Ovary (tissue), 10 donors: ENCODE measurements at regions of chr12 and their contacts with region 1.

Region 1: GRCh38 chr12:49188914-49189367 is at the start of gene TUBA1A:
- DNase-seq: peak; percentile 90 to 96 (median 91)
- H3K4me3 ChIP-seq: peak within 1 kb of the TSS; percentile 77
- H3K27ac ChIP-seq: peak within 1 kb of the TSS; percentile 94 to 95
- H3K4me1 ChIP-seq: peaks cover 3% of the 10 kb centered on the region
- H3K27me3 ChIP-seq: no peaks in the 10 kb centered on the region
- CTCF ChIP-seq: no peak
- EP300 ChIP-seq: peak; percentile 12
- POLR2A ChIP-seq: peak; percentile 94
- total RNA-seq, gene TUBA1A: 140 to 247 (median 184) TPM

Region 2: DNA sequence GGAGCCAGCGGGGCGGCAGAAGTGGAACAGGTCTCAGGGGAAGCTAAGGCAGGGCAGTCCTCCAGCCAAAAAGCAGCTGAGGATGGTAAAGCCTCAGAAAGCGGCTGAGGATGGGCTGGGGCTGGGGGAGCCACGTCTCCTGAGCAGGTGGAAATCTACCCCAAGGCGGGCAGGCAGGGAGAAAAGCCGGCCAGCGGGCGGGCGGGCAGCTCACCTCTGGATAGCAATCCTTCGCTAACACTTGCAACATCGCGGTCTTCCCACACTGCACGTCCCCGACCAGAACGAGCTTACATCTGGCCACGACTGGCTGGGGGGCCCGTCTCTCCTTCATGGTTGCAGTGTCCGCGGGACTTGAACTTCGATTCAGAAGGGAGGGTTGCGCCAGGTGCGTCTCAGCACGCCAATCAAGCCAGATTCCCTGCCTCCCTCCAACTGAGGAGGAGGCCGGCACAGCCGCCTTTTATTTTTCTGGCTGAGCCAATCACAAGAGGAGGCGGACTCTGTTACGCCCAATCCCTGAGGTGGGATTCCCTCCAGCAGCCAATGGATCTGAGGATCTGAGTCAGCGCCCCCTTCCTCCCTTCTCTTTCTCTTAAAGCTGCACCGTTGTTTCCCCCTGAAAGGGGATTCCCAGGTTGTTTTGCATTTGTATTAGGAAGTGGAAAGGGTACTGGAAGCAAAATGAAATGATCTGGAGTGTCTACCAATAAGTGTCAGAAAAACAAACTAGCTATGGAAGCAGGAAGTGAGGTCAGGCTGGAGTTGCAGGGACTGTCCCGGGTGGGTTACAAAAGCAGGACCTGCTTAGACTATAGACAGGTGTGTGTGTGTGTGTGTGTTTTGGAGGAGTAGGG is 323.3 kb before region 1 on chr12 and contains the start of gene RND1:
- intact Hi-C with region 1: no loop called
- DNase-seq: peak; percentile 82 to 92 (median 86)
- H3K4me3 ChIP-seq: peak within 1 kb of the TSS; percentile 55
- H3K27ac ChIP-seq: no peak within 1 kb of the TSS
- H3K4me1 ChIP-seq: peaks cover 2% of the 10 kb centered on the region
- H3K27me3 ChIP-seq: no peaks in the 10 kb centered on the region
- CTCF ChIP-seq: no peak
- EP300 ChIP-seq: no peak
- POLR2A ChIP-seq: peak; percentile 91
- total RNA-seq, gene RND1: 0.23 to 3.8 (median 0.38) TPM

Region 3: GRCh38 chr12:49130151-49131050 is 58.5 kb before region 1 on chr12:
- intact Hi-C with region 1: loop called in 3 of 4 experiments (anchors 2 to 10 kb)
- DNase-seq: peak; percentile 93 to 96 (median 94)
- H3K4me3 ChIP-seq: peak overlapping the region; percentile 65
- H3K27ac ChIP-seq: peak overlapping the region; percentile 93 to 98
- H3K4me1 ChIP-seq: peaks cover 6% of the 10 kb centered on the region
- H3K27me3 ChIP-seq: no peaks in the 10 kb centered on the region
- CTCF ChIP-seq: peak; percentile 72 to 91 (median 88)
- EP300 ChIP-seq: peak; percentile 38
- POLR2A ChIP-seq: peak; percentile 1

Region 4: DNA sequence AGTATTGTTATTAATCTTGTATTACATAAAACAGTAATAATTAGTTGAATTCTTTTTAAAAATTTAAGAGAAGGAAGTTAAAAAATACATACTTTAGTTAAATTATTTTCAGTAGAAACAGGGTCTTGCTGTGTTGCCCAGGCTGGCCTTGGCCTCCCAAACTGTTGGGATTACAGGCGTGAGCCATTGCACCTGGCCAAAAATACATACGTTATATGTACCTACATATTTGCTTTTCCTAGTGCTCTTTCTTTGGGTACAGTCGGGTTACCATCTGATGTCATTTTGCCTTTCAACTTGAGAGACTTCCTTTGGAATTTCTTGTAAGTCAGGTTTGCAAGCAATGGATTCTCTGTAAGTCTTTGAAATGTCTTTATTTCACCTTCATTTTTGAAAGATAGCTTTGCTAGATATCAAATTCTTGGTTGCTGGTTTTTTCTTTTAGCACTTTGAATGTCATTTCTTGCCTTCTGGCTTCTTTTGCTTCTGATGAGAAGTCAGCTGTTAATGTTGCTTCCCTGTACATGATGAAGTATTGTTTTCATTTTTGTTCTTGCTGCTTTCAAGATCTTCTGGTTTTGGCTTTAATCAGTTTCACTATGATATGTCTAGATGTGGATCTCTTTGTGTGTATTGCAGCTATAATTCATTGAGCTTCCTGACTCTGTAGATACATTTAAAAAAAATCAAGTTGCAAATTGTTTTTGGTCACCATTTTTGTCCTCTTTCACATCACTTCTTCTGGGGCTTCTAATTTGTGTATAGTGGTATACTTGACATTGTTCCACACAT is 262.7 kb after region 1 on chr12:
- intact Hi-C with region 1: no loop called
- DNase-seq: no peak
- H3K4me3 ChIP-seq: no peak overlapping the region
- H3K27ac ChIP-seq: no peak overlapping the region
- H3K4me1 ChIP-seq: no peaks in the 10 kb centered on the region
- H3K27me3 ChIP-seq: no peaks in the 10 kb centered on the region
- CTCF ChIP-seq: no peak
- EP300 ChIP-seq: no peak
- POLR2A ChIP-seq: no peak